Activated T-helper 1 cell treated with anti-CD3 and anti-CD28 coated beads, Interleukin-12 subunit alpha, Interleukin-12 subunit beta, Interleukin-2, Interleukin-4 antibody, amounts not matched to agents 30 ng/mL and 10 ng/mL and 1 ng/mL, durations not matched to agents 14 hours and 24 hours and 36 hours (primary cell): ENCODE measurements at regions of chr2 and their contacts with region 1.

Region 1: DNA sequence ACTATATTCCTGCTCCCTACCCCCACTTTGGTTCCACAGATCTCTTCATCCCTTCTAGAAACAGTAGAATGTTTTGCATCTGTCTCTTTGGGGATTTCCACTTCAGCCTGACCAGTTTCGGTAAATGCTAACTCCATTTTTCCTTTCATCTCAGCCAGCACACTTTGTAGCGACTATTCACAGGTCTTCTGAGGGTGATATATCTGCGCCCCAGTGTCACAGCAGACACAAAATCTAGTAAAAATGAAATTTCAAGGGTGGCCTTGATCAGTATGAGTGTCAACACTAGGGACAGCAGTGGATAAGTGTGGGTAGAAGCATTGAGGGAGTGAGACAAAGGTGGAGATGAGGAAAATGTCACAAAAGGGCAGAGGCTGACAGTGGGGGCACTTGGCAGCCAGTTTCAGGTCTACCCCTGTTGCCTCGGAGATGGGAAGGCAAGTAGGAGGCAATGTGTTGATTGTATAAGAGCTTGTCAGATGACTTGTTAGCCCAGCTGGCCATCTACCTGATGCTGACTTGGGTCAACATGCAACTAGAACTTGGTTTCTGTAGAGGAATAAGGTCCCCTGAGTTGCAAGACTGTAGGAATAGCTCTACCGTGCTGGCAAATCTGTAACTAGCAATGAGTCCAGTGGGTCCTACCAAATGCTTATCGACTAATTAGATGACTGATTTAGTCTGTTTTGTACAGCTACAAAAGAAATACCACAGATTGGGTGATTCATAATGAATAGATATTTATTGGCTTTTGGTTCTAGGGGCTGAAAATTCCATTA is 60.7 kb downstream of the CXCR4 start:
- DNase-seq: peak; percentile 65
- H3K4me3 Mint-ChIP-seq: peak overlapping the region; percentile 43
- H3K27ac Mint-ChIP-seq: peak overlapping the region; percentile 90
- H3K4me1 Mint-ChIP-seq: peaks cover 87% of the 10 kb centered on the region
- H3K27me3 Mint-ChIP-seq: no peaks in the 10 kb centered on the region

Region 2: GRCh38 chr2:135741395-135742324 is 315.6 kb before region 1 on chr2 and contains the start of gene UBXN4:
- intact Hi-C with region 1: loop called (anchors 1 kb)
- DNase-seq: peak; percentile 89
- H3K4me3 Mint-ChIP-seq: peak within 1 kb of the TSS; percentile 99
- H3K27ac Mint-ChIP-seq: peak within 1 kb of the TSS; percentile 100
- H3K4me1 Mint-ChIP-seq: peaks cover 36% of the 10 kb centered on the region
- H3K27me3 Mint-ChIP-seq: no peaks in the 10 kb centered on the region
- total RNA-seq, gene UBXN4: 115 and 121 TPM in 2 replicates

Region 3: DNA sequence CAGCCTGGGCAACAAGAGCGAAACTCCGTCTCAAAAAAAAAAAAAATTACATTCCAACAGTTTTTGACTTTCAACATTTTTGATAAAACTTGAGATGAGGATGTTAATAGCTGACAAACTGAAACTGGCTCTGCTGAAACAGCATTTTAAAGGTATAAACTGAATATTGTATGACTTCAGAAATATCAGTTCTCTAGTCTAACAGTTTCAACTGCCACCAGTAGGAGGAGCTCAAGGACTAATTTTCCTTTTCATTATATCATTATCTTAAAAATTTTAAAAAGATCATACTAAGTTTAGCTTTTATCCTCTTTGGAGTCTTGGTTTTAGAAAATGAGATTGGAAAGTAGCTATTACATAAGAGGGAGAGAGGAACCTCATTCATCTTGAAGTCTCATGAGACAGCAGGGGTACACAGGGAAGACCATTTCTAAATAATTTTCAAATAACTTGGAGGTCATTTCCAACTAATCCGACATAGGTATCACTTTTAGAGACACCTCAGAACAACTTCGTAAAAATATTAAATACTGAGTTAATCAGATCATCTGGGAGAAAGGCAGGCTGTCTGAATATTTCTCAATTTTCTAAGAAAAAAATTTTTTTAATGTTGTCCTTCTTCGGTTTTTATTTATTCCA is 143.4 kb before region 1 on chr2:
- intact Hi-C with region 1: loop called (anchors 1 kb)
- DNase-seq: no peak
- H3K4me3 Mint-ChIP-seq: no peak overlapping the region
- H3K27ac Mint-ChIP-seq: no peak overlapping the region
- H3K4me1 Mint-ChIP-seq: peaks cover 27% of the 10 kb centered on the region
- H3K27me3 Mint-ChIP-seq: no peaks in the 10 kb centered on the region

Region 4: DNA sequence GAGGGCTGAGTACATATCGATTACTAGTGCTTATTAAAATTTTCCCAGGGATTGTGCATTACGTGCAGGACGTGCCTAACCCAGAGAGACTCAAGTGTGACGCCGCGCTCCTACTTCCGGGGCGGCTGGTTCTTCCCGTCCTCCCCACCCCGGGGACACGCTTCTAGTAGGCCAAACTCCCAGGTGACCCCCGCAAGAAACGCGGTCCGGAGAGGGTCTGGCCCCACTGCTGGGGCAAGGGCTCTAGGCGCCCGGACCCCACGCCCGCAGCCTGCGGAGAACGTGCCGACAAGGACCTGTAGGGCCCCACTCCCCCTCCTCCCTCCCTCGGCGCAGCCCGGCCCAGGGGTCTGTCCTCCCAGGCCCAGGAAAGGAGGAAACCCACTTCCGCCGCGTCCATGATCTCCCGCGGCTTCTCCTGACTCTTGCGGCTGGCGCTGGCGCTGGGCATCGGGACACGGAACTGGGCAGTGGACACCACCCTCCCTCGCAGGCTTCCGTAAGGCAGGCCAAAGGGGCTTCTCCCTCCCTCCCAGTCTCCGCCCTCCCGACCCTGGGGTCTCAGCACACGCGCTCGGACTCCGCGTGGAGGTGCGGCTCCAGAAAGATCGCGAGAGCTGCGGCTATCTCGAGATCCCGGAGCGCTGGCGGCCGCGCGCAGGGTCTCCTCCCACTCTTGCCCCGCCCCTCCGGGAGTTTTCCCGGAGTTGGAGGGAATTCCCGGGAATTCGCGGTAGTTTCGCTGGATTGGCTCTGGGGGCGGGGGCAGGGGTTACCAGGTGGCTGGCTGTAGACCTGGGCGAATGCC is 72.0 kb before region 1 on chr2 and contains the start of gene DARS1:
- intact Hi-C with region 1: loop called (anchors 1 kb)
- DNase-seq: peak; percentile 78
- H3K4me3 Mint-ChIP-seq: peak within 1 kb of the TSS; percentile 91
- H3K27ac Mint-ChIP-seq: peak within 1 kb of the TSS; percentile 97
- H3K4me1 Mint-ChIP-seq: peaks cover 62% of the 10 kb centered on the region
- H3K27me3 Mint-ChIP-seq: no peaks in the 10 kb centered on the region
- total RNA-seq, gene DARS1: 132 and 140 TPM in 2 replicates

Region 5: GRCh38 chr2:136117909-136118818 is 61.0 kb after region 1 on chr2 and contains the start of gene CXCR4:
- intact Hi-C with region 1: loop called (anchors 1 kb)
- DNase-seq: peak; percentile 85
- H3K4me3 Mint-ChIP-seq: peak within 1 kb of the TSS; percentile 97
- H3K27ac Mint-ChIP-seq: peak within 1 kb of the TSS; percentile 98
- H3K4me1 Mint-ChIP-seq: peaks cover 73% of the 10 kb centered on the region
- H3K27me3 Mint-ChIP-seq: peaks cover 31% of the 10 kb centered on the region
- total RNA-seq, gene CXCR4: 83.3 and 86.3 TPM in 2 replicates

Region 6: GRCh38 chr2:136238286-136239078 is 181.3 kb after region 1 on chr2:
- intact Hi-C with region 1: loop called (anchors 1 kb)
- DNase-seq: peak; percentile 12
- H3K4me3 Mint-ChIP-seq: peak overlapping the region; percentile 27
- H3K27ac Mint-ChIP-seq: peak overlapping the region; percentile 88
- H3K4me1 Mint-ChIP-seq: peaks cover 49% of the 10 kb centered on the region
- H3K27me3 Mint-ChIP-seq: no peaks in the 10 kb centered on the region

Region 7: DNA sequence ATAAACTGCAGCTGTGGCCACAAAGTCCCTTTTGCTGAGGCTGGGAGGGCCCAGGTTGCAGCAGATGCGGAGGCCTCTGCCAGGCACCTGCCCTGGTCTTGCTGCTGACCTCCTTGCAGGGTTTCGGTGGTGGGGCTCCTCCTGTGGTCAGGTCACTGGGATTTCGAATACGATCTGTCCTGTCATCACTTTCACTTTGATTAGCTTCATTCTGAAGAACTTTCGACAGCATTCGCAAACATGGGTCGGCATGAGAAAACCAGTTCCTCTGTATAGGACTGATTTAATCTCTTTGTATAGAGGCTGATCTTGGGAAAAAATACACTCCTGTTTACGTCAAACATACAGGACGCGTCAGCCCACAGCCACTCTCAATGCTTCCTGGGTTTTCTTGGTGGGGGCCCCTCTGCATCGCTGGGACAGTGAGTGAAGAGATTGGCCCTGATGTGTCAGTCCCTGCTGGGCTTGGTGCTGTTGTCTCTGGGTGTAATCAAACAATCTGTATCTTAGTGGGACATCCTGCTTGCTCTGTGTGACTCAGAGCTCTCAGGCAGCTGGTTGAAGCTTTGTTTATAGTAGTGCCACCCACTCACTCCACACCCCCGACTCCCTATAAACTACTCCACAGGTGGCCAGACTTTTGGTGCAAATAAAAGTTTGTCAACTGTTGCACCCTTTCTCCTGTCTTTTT is 270.1 kb after region 1 on chr2:
- intact Hi-C with region 1: loop called (anchors 1 kb)
- DNase-seq: peak; percentile 69
- H3K4me3 Mint-ChIP-seq: peak overlapping the region; percentile 43
- H3K27ac Mint-ChIP-seq: peak overlapping the region; percentile 91
- H3K4me1 Mint-ChIP-seq: peaks cover 68% of the 10 kb centered on the region
- H3K27me3 Mint-ChIP-seq: peaks cover 4% of the 10 kb centered on the region